Activated CD4-positive, alpha-beta memory T cell treated with anti-CD3 and anti-CD28 coated beads for 36 hours (primary cell): ENCODE measurements at regions of chr1 and their contacts with region 1.

Region 1: GRCh38 chr1:66764994-66765578 is 12.8 kb downstream of the DYNLT5 start:
- DNase-seq: peak; percentile 52
- H3K4me3 Mint-ChIP-seq: no peak overlapping the region
- H3K27ac Mint-ChIP-seq: no peak overlapping the region
- H3K4me1 Mint-ChIP-seq: peaks cover 17% of the 10 kb centered on the region
- H3K27me3 Mint-ChIP-seq: no peaks in the 10 kb centered on the region

Region 2: GRCh38 chr1:66732407-66733166 is 32.5 kb before region 1 on chr1:
- CTCF ChIA-PET with region 1: no interaction called
- POLR2A ChIA-PET with region 1: no interaction called
- intact Hi-C with region 1: no loop called
- DNase-seq: no peak
- H3K4me3 Mint-ChIP-seq: no peak overlapping the region
- H3K27ac Mint-ChIP-seq: peak overlapping the region; percentile 28
- H3K4me1 Mint-ChIP-seq: peaks cover 24% of the 10 kb centered on the region
- H3K27me3 Mint-ChIP-seq: peaks cover 2% of the 10 kb centered on the region

Region 3: GRCh38 chr1:66924756-66925557 is 159.9 kb after region 1 on chr1 and contains the starts of genes DNAI4 and MIER1:
- CTCF ChIA-PET with region 1: interaction called, 12 read pairs
- POLR2A ChIA-PET with region 1: no interaction called
- intact Hi-C with region 1: loop called (anchors 1 kb)
- DNase-seq: peak; percentile 99
- H3K4me3 Mint-ChIP-seq: peak within 1 kb of the TSS; percentile 97
- H3K27ac Mint-ChIP-seq: peak within 1 kb of the TSS; percentile 96
- H3K4me1 Mint-ChIP-seq: peaks cover 53% of the 10 kb centered on the region
- H3K27me3 Mint-ChIP-seq: no peaks in the 10 kb centered on the region
- total RNA-seq, gene DNAI4: 1.4 to 1.6 TPM
- total RNA-seq, gene MIER1: 54.7 to 58.8 TPM

Region 4: GRCh38 chr1:66981679-66982078 is 216.6 kb after region 1 on chr1:
- CTCF ChIA-PET with region 1: interaction called, 4 read pairs
- POLR2A ChIA-PET with region 1: no interaction called
- intact Hi-C with region 1: loop called (anchors 2 kb)
- DNase-seq: peak; percentile 47
- H3K4me3 Mint-ChIP-seq: peak overlapping the region; percentile 53
- H3K27ac Mint-ChIP-seq: peak overlapping the region; percentile 72
- H3K4me1 Mint-ChIP-seq: peaks cover 42% of the 10 kb centered on the region
- H3K27me3 Mint-ChIP-seq: no peaks in the 10 kb centered on the region

Region 5: GRCh38 chr1:67053785-67054772 is 289.0 kb after region 1 on chr1 and contains the start of gene SLC35D1:
- CTCF ChIA-PET with region 1: interaction called, 3 read pairs
- POLR2A ChIA-PET with region 1: no interaction called
- intact Hi-C with region 1: loop called (anchors 5 kb)
- DNase-seq: peak; percentile 84
- H3K4me3 Mint-ChIP-seq: peak within 1 kb of the TSS; percentile 85
- H3K27ac Mint-ChIP-seq: peak within 1 kb of the TSS; percentile 87
- H3K4me1 Mint-ChIP-seq: peaks cover 24% of the 10 kb centered on the region
- H3K27me3 Mint-ChIP-seq: no peaks in the 10 kb centered on the region
- total RNA-seq, gene SLC35D1: 11.0 to 11.1 TPM

Region 6: DNA sequence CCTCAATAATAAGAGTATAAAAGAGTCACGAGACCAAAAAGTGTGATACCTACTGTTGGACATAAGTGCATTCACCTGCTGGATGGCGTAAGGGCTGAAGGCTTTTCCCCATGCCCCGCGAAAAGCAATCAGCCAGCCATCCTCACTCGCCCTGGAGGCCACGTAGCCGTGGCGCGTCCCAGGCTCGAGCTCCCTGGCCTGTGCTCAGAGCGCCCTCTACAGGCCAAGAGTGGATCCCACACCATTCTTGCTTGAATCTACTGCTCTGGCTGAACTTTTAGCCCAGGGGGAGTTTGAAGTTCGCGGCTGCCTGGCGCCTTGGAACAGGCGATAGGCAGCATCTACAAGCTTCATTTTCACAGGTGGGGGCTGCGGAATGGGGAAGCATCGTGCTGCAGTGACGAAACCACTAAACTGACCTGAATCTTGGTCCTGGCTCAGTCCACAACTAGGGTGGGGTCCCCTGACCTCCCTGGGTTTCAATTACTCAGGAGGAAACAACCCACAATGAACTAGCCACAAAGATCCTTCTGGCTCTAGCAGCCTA is 735.4 kb after region 1 on chr1:
- CTCF ChIA-PET with region 1: interaction called, 3 read pairs
- POLR2A ChIA-PET with region 1: no interaction called
- intact Hi-C with region 1: loop called (anchors 5 kb)
- DNase-seq: peak; percentile 93
- H3K4me3 Mint-ChIP-seq: no peak overlapping the region
- H3K27ac Mint-ChIP-seq: no peak overlapping the region
- H3K4me1 Mint-ChIP-seq: peaks cover 2% of the 10 kb centered on the region
- H3K27me3 Mint-ChIP-seq: peaks cover 6% of the 10 kb centered on the region